ENCODE measurements at regions of chr5 and their contacts with region 1.

Region 1: GRCh38 chr5:149035372-149035790 is 27.5 kb downstream of the SH3TC2 start:
- DNase-seq: peak; percentile 26 to 65 (median 52)
- ATAC-seq: peak; percentile 80
- H3K4me3 ChIP-seq: no peak overlapping the region
- H3K4me3 Mint-ChIP-seq: no peak overlapping the region
- H3K27ac ChIP-seq: no peak overlapping the region
- H3K27ac Mint-ChIP-seq: no peak overlapping the region
- H3K4me1 ChIP-seq: no peaks in the 10 kb centered on the region
- H3K4me1 Mint-ChIP-seq: peaks cover 0 to 19% (median 0%) of the 10 kb centered on the region in 7 donors
- H3K27me3 ChIP-seq: no peaks in the 10 kb centered on the region
- H3K27me3 Mint-ChIP-seq: peaks cover 0 to 9% (median 5%) of the 10 kb centered on the region in 5 donors

Region 2: GRCh38 chr5:148186248-148186996 is 849.0 kb before region 1 on chr5:
- CTCF ChIA-PET with region 1: no interaction called
- POLR2A ChIA-PET with region 1: no interaction called
- intact Hi-C with region 1: loop called in 1 of 2 experiments (anchors 10 kb)
- DNase-seq: no peak
- ATAC-seq: peak; percentile 88
- H3K4me3 ChIP-seq: no peak overlapping the region
- H3K4me3 Mint-ChIP-seq: no peak overlapping the region
- H3K27ac ChIP-seq: no peak overlapping the region
- H3K27ac Mint-ChIP-seq: no peak overlapping the region
- H3K4me1 ChIP-seq: no peaks in the 10 kb centered on the region
- H3K4me1 Mint-ChIP-seq: peaks cover 0 to 10% (median 0%) of the 10 kb centered on the region in 7 donors
- H3K27me3 ChIP-seq: no peaks in the 10 kb centered on the region
- H3K27me3 Mint-ChIP-seq: peaks cover 7 to 42% (median 17%) of the 10 kb centered on the region in 5 donors

Region 3: GRCh38 chr5:148443998-148444397 is 591.4 kb before region 1 on chr5:
- CTCF ChIA-PET with region 1: no interaction called
- POLR2A ChIA-PET with region 1: no interaction called
- intact Hi-C with region 1: loop called (anchors 1 to 10 kb)
- DNase-seq: peak in 7 of 9 donors; percentile 23 to 53 (median 41)
- ATAC-seq: peak; percentile 84
- H3K4me3 ChIP-seq: no peak overlapping the region
- H3K4me3 Mint-ChIP-seq: no peak overlapping the region
- H3K27ac ChIP-seq: no peak overlapping the region
- H3K27ac Mint-ChIP-seq: peak overlapping the region in 2 of 9 donors; percentile 12 to 40
- H3K4me1 ChIP-seq: no peaks in the 10 kb centered on the region
- H3K4me1 Mint-ChIP-seq: peaks cover 0 to 5% (median 0%) of the 10 kb centered on the region in 7 donors
- H3K27me3 ChIP-seq: no peaks in the 10 kb centered on the region
- H3K27me3 Mint-ChIP-seq: peaks cover 0 to 2% (median 0%) of the 10 kb centered on the region in 5 donors

Region 4: DNA sequence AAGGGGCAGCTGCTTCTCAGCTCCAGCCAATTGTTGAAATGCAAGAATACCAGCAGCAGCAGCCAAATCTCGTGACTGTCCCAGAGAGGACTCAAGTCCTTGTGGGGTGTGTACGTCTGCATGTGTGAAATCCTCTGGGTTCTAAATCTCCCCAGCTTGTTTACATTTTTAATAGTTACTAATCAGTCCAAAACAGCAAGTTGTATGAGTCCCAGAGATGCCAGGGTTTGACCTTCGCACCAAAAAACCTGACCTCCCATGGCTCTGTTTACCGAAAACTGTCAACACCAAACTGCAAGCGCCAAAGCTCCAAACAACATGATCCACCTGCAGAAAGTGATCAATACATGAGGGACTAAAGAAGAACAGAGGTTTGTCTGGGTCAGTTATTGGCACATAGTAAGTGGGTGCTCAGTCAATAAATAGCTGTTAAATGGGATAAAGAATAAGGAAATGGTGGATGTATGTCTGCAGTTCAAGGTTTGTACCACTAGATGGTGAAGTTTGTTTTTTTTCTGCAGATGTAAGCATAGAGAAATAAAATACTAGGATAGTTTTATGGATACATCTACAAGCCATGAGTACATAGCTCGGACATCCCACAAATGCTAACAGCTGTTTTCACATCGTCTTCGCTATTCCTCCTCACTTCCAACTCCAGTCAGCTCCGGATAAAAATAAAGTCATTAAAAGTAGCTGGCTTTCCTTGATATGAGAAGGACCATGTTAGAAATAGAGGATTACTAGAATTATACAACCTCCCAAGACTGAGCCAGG is 294.2 kb before region 1 on chr5:
- CTCF ChIA-PET with region 1: interaction called, 31 read pairs
- POLR2A ChIA-PET with region 1: no interaction called
- intact Hi-C with region 1: loop called (anchors 1 kb)
- DNase-seq: peak in 4 of 9 donors; percentile 12 to 30 (median 22)
- ATAC-seq: peak; percentile 65
- H3K4me3 ChIP-seq: no peak overlapping the region
- H3K4me3 Mint-ChIP-seq: no peak overlapping the region
- H3K27ac ChIP-seq: no peak overlapping the region
- H3K27ac Mint-ChIP-seq: no peak overlapping the region
- H3K4me1 ChIP-seq: no peaks in the 10 kb centered on the region
- H3K4me1 Mint-ChIP-seq: peaks cover 0 to 5% (median 0%) of the 10 kb centered on the region in 7 donors
- H3K27me3 ChIP-seq: no peaks in the 10 kb centered on the region
- H3K27me3 Mint-ChIP-seq: peaks cover 17 to 37% (median 26%) of the 10 kb centered on the region in 5 donors

Region 5: DNA sequence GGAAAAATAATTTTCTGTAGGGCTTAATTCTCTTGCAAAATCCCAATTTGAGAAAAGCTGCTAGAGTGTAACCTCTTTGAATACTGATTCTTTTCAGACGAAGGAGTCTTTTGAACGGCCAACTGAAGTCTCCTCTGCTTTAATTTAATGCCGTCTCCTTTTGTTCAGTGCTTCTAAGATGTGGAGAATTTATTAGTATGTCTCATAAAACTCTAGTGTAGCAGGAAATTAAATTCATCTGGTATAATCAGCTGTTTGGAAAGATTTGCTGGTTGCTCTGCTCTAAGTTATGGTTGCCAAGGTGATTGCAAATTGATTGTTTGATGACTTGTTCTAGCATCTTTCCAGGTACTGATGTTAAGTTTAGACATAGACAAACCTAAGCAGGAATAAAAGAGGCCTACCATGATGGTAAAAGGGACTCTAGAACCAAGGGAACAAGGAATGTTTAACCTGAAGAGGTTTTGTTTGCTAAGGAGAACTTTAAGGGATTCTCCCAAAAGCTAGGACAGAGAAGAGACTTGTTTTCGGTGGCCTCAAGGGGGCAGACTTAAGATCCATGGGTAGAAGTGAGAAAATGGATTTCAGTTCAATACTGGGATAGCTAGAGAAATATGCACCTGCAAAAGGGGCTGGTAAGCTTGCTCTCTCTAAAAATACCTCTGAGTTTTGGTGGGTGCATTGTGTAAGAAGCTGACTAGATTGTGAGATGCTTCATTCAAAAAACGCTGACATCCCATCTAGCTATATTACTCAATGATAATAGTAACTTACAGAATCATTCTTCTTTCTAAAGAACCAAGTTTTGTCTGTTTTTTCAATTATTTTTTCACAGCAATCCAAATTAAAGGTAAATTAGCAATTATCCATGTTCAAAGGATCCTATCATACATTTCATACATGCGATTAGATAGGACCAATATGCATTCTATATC is 214.7 kb before region 1 on chr5:
- CTCF ChIA-PET with region 1: interaction called, 4 read pairs
- POLR2A ChIA-PET with region 1: no interaction called
- intact Hi-C with region 1: loop called (anchors 1 to 5 kb)
- DNase-seq: peak in 4 of 9 donors; percentile 9 to 38 (median 20)
- ATAC-seq: peak; percentile 57
- H3K4me3 ChIP-seq: no peak overlapping the region
- H3K4me3 Mint-ChIP-seq: no peak overlapping the region
- H3K27ac ChIP-seq: no peak overlapping the region
- H3K27ac Mint-ChIP-seq: no peak overlapping the region
- H3K4me1 ChIP-seq: peaks cover 0 to 8% of the 10 kb centered on the region in 2 donors
- H3K4me1 Mint-ChIP-seq: peaks cover 3 to 15% (median 8%) of the 10 kb centered on the region in 7 donors
- H3K27me3 ChIP-seq: no peaks in the 10 kb centered on the region
- H3K27me3 Mint-ChIP-seq: peaks cover 0 to 51% (median 0%) of the 10 kb centered on the region in 5 donors

Region 6: GRCh38 chr5:148826053-148826738 is 209.2 kb before region 1 on chr5 and contains the start of gene ADRB2:
- CTCF ChIA-PET with region 1: interaction called, 4 read pairs
- POLR2A ChIA-PET with region 1: no interaction called
- intact Hi-C with region 1: loop called (anchors 1 to 5 kb)
- DNase-seq: peak; percentile 74 to 83 (median 79)
- ATAC-seq: peak; percentile 94
- H3K4me3 ChIP-seq: peak within 1 kb of the TSS; percentile 75
- H3K4me3 Mint-ChIP-seq: peak within 1 kb of the TSS; percentile 83 to 94 (median 89)
- H3K27ac ChIP-seq: peak within 1 kb of the TSS; percentile 54
- H3K27ac Mint-ChIP-seq: peak within 1 kb of the TSS; percentile 16 to 82 (median 70)
- H3K4me1 ChIP-seq: peaks cover 7 to 18% of the 10 kb centered on the region in 2 donors
- H3K4me1 Mint-ChIP-seq: peaks cover 20 to 43% (median 31%) of the 10 kb centered on the region in 7 donors
- H3K27me3 ChIP-seq: no peaks in the 10 kb centered on the region
- H3K27me3 Mint-ChIP-seq: peaks cover 0 to 76% (median 5%) of the 10 kb centered on the region in 5 donors
- total RNA-seq, gene ADRB2: 0.36 to 14.4 (median 1.3) TPM

Region 7: GRCh38 chr5:149049371-149049781 is 14.0 kb after region 1 on chr5:
- CTCF ChIA-PET with region 1: no interaction called
- POLR2A ChIA-PET with region 1: no interaction called
- intact Hi-C with region 1: no loop called
- DNase-seq: no peak
- ATAC-seq: no peak
- H3K4me3 ChIP-seq: no peak overlapping the region
- H3K4me3 Mint-ChIP-seq: no peak overlapping the region
- H3K27ac ChIP-seq: no peak overlapping the region
- H3K27ac Mint-ChIP-seq: no peak overlapping the region
- H3K4me1 ChIP-seq: no peaks in the 10 kb centered on the region
- H3K4me1 Mint-ChIP-seq: no peaks in the 10 kb centered on the region
- H3K27me3 ChIP-seq: no peaks in the 10 kb centered on the region
- H3K27me3 Mint-ChIP-seq: peaks cover 0 to 13% (median 7%) of the 10 kb centered on the region in 5 donors

Region 8: GRCh38 chr5:149114403-149115312 is 79.3 kb after region 1 on chr5:
- CTCF ChIA-PET with region 1: no interaction called
- POLR2A ChIA-PET with region 1: no interaction called
- intact Hi-C with region 1: loop called in 1 of 2 experiments (anchors 5 kb)
- DNase-seq: peak in 5 of 9 donors; percentile 27 to 45 (median 32)
- ATAC-seq: peak; percentile 76
- H3K4me3 ChIP-seq: no peak overlapping the region
- H3K4me3 Mint-ChIP-seq: no peak overlapping the region
- H3K27ac ChIP-seq: no peak overlapping the region
- H3K27ac Mint-ChIP-seq: no peak overlapping the region
- H3K4me1 ChIP-seq: no peaks in the 10 kb centered on the region
- H3K4me1 Mint-ChIP-seq: peaks cover 0 to 1% (median 0%) of the 10 kb centered on the region in 7 donors
- H3K27me3 ChIP-seq: no peaks in the 10 kb centered on the region
- H3K27me3 Mint-ChIP-seq: peaks cover 19 to 31% (median 27%) of the 10 kb centered on the region in 5 donors

Measured in naive thymus-derived CD4-positive, alpha-beta T cell (primary cell).